Heart left ventricle (tissue), 16 donors: ENCODE measurements at regions of chr1 and their contacts with region 1.

Region 1: DNA sequence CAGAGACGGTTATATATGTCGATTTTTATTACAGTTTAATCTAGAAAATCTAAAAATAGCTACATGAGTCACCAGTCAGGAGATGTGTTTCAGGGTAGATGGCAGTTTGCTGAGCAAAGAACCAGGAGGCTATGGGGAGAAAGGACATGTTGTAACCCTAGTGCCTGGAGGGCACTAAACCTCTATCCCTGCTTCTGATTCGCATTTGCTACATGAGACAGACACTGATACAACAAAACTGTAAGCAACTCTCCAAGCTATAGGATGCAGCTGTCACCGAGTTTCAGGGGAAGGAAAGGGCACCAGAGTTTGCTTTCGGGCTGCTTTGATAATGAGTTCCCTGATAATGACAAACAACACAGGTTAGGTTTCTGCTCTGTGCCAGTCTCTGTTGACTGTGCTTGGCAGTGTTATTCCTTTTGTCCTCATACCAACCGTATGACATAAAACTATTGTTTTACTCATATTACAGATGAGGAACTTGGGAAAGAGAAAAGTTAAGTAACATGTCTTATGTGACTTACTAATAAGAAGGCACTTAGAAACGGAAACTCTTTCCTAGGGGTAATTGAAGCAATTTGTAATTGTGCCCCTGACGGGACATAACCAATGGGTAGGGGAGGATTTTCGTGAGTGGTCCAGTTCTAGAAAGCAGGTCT is 43.1 kb downstream of the C1orf198 start:
- DNase-seq: no peak
- ATAC-seq: peak; percentile 66 to 81 (median 72)
- H3K4me3 ChIP-seq: no peak overlapping the region
- H3K27ac ChIP-seq: peak overlapping the region; percentile 78 to 94 (median 82)
- H3K4me1 ChIP-seq: peaks cover 4 to 87% (median 63%) of the 10 kb centered on the region in 12 donors
- H3K27me3 ChIP-seq: no peaks in the 10 kb centered on the region
- CTCF ChIP-seq: no peak
- POLR2A ChIP-seq: no peak

Region 2: GRCh38 chr1:230713915-230714764 is 111.1 kb before region 1 on chr1 and contains the start of gene AGT:
- intact Hi-C with region 1: no loop called
- DNase-seq: peak; percentile 84 to 92 (median 87)
- ATAC-seq: peak; percentile 95 to 98 (median 97)
- H3K4me3 ChIP-seq: peak within 1 kb of the TSS; percentile 18 to 76 (median 52)
- H3K27ac ChIP-seq: peak within 1 kb of the TSS; percentile 54 to 93 (median 82)
- H3K4me1 ChIP-seq: peaks cover 0 to 49% (median 17%) of the 10 kb centered on the region in 12 donors
- H3K27me3 ChIP-seq: no peaks in the 10 kb centered on the region
- CTCF ChIP-seq: no peak
- POLR2A ChIP-seq: no peak
- total RNA-seq, gene AGT: 37.1 to 182 (median 69.8) TPM

Region 3: DNA sequence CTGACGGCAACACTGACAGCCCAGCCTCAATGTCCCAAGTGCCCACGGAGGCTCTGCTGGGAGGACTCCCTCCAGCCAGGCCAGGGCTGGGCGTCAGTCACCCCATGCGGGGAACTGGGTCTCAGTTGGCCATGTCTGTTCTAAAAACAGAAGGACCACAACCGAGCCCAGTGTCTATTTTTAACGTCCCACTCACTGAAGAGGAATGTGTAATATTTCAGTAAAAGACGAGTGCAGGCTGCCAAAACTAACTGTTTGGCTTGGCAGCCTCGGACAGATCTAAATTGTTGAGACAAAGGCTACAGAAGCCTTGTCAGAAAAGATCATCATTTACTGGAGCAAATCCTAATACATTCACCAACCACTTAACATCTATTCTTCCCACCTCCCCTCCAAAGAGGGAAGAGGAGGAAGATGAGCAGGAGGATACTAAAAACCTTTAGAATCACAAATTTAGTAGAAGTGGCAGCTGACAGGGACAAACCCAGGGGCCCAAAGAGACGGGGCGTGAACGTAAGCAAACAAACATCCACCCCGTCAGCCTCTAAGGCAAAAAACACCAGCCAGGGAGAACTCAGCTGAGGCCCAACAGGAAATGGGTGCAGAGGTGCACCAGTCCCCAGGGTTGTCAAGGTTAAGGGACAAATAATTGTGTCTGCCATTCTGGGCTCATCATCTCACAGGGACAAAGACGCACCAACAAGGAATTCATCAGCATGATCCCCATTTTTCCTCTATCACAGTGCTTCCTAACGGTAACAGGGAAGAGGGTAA is 24.4 kb after region 1 on chr1:
- intact Hi-C with region 1: loop called in 1 of 10 experiments (anchors 2 kb)
- DNase-seq: peak; percentile 80 to 85 (median 82)
- ATAC-seq: peak; percentile 91 to 94 (median 93)
- H3K4me3 ChIP-seq: peak overlapping the region in 1 of 12 donors; percentile 2
- H3K27ac ChIP-seq: peak overlapping the region; percentile 74 to 92 (median 80)
- H3K4me1 ChIP-seq: peaks cover 4 to 70% (median 50%) of the 10 kb centered on the region in 12 donors
- H3K27me3 ChIP-seq: no peaks in the 10 kb centered on the region
- CTCF ChIP-seq: no peak
- POLR2A ChIP-seq: no peak

Region 4: GRCh38 chr1:230878591-230878990 is 53.4 kb after region 1 on chr1:
- intact Hi-C with region 1: loop called in 1 of 10 experiments (anchors 10 kb)
- DNase-seq: peak in 1 of 5 donors; percentile 38
- ATAC-seq: peak in 1 of 4 donors; percentile 32
- H3K4me3 ChIP-seq: no peak overlapping the region
- H3K27ac ChIP-seq: peak overlapping the region in 1 of 12 donors; percentile 49
- H3K4me1 ChIP-seq: peaks cover 0 to 13% (median 0%) of the 10 kb centered on the region in 12 donors
- H3K27me3 ChIP-seq: peaks cover 0 to 12% (median 0%) of the 10 kb centered on the region in 9 donors
- CTCF ChIP-seq: no peak
- POLR2A ChIP-seq: no peak